HepG2 (cell line): ENCODE measurements at regions of chr9 and their contacts with region 1.

Region 1: GRCh38 chr9:111759762-111760639 is 34.7 kb downstream of the SHOC1 start:
- DNase-seq: peak; percentile 50
- ATAC-seq: peak; percentile 72
- H3K4me3 ChIP-seq: no peak overlapping the region
- H3K27ac ChIP-seq: no peak overlapping the region
- H3K4me1 ChIP-seq: no peaks in the 10 kb centered on the region
- H3K27me3 ChIP-seq: no peaks in the 10 kb centered on the region
- CTCF ChIP-seq: peak; percentile 76
- EP300 ChIP-seq: no peak
- POLR2A ChIP-seq: no peak
- RAD21 ChIP-seq: peak; percentile 60; the same call in 1 of the 2 replicates

Region 2: DNA sequence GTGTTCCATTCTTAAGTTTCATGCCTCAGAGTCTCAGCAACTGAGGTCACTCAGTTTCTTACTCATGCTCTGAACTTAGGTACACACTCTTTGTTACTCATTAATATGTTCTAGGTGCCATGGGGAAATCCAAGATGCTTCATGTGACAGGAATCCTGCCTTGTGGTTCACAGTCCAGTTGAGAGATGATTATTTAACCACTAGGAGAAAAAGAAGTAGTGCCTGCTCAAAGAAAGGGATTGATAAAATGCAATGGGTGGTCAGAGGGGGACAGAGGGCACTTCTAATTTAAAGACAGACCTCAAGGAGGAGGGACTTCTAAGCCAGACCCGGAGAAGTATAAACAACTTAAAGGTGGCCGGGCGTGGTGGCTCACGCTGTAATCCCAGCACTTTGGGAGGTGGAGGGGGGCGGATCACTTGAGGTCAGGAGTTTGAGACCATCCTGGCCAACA is 205.6 kb after region 1 on chr9:
- CTCF ChIA-PET with region 1: no interaction called
- POLR2A ChIA-PET with region 1: no interaction called
- in situ Hi-C with region 1: loop called (anchors 10 kb)
- intact Hi-C with region 1: no loop called
- DNase-seq: peak; percentile 19
- ATAC-seq: no peak; the same call in 2 of the 3 replicates
- H3K4me3 ChIP-seq: no peak overlapping the region
- H3K27ac ChIP-seq: no peak overlapping the region
- H3K4me1 ChIP-seq: peaks cover 17% of the 10 kb centered on the region
- H3K27me3 ChIP-seq: no peaks in the 10 kb centered on the region
- CTCF ChIP-seq: no peak
- EP300 ChIP-seq: no peak; a peak in 1 of 4 replicates
- POLR2A ChIP-seq: no peak
- RAD21 ChIP-seq: no peak

Region 3: GRCh38 chr9:111975709-111976108 is 215.7 kb after region 1 on chr9:
- CTCF ChIA-PET with region 1: interaction called, 4 read pairs
- POLR2A ChIA-PET with region 1: no interaction called
- in situ Hi-C with region 1: no loop called
- intact Hi-C with region 1: loop called (anchors 1 kb)
- DNase-seq: peak; percentile 38
- ATAC-seq: peak; percentile 95
- H3K4me3 ChIP-seq: no peak overlapping the region
- H3K27ac ChIP-seq: no peak overlapping the region
- H3K4me1 ChIP-seq: peaks cover 9% of the 10 kb centered on the region; the same call in 1 of the 2 replicates
- H3K27me3 ChIP-seq: no peaks in the 10 kb centered on the region; a peak in 2 of 5 replicates
- CTCF ChIP-seq: peak; percentile 77
- EP300 ChIP-seq: no peak
- POLR2A ChIP-seq: no peak
- RAD21 ChIP-seq: peak; percentile 41; the same call in 1 of the 2 replicates

Region 4: DNA sequence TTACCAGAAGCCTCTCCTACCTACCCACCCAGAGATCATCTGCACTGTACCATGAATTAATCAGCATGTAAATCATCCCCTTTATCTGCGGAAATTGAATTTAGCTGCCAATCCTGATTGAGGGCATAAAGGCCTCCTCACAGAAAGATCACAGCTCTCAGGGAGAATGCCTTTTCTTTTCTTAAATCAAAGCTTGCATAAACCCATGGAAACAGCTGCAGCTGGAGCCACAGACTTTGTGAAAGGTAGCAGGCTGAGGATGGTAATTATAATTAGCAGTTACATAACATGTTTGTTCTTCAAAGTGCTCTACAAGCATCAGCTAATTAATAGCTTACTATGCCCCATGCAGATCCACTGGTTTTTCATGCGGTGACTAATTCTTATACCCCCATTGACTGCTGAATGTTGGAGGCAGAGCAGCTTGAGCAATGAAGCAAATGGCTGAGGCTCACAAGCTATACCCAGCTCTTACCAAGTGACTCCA is 360.5 kb after region 1 on chr9:
- CTCF ChIA-PET with region 1: no interaction called
- POLR2A ChIA-PET with region 1: no interaction called
- in situ Hi-C with region 1: no loop called
- intact Hi-C with region 1: no loop called
- DNase-seq: no peak
- ATAC-seq: no peak
- H3K4me3 ChIP-seq: no peak overlapping the region
- H3K27ac ChIP-seq: peak overlapping the region; percentile 96
- H3K4me1 ChIP-seq: peaks cover 57% of the 10 kb centered on the region
- H3K27me3 ChIP-seq: no peaks in the 10 kb centered on the region
- CTCF ChIP-seq: no peak
- EP300 ChIP-seq: no peak
- POLR2A ChIP-seq: no peak
- RAD21 ChIP-seq: no peak